Common myeloid progenitor, CD34-positive (primary cell): ENCODE measurements at regions of chr11 and their contacts with region 1.

Region 1: GRCh38 chr11:72091005-72091691 is 10.5 kb downstream of the LRRC51 start:
- DNase-seq: peak; percentile 86 to 93 (median 91)
- H3K4me3 ChIP-seq: peak overlapping the region in 1 of 7 experiments; percentile 14
- H3K27ac ChIP-seq: peak overlapping the region in 1 of 2 experiments; percentile 30
- H3K4me1 ChIP-seq: peaks cover 0 to 18% (median 13%) of the 10 kb centered on the region in 4 experiments
- H3K27me3 ChIP-seq: no peaks in the 10 kb centered on the region

Region 2: GRCh38 chr11:71962428-71963038 is 128.6 kb before region 1 on chr11:
- CTCF ChIA-PET with region 1: no interaction called
- POLR2A ChIA-PET with region 1: no interaction called
- DNase-seq: peak; percentile 54 to 88 (median 80)
- H3K4me3 ChIP-seq: peak overlapping the region in 3 of 7 experiments; percentile 0 to 61 (median 16)
- H3K27ac ChIP-seq: peak overlapping the region in 1 of 2 experiments; percentile 79
- H3K4me1 ChIP-seq: peaks cover 9 to 21% (median 14%) of the 10 kb centered on the region in 4 experiments
- H3K27me3 ChIP-seq: no peaks in the 10 kb centered on the region

Region 3: DNA sequence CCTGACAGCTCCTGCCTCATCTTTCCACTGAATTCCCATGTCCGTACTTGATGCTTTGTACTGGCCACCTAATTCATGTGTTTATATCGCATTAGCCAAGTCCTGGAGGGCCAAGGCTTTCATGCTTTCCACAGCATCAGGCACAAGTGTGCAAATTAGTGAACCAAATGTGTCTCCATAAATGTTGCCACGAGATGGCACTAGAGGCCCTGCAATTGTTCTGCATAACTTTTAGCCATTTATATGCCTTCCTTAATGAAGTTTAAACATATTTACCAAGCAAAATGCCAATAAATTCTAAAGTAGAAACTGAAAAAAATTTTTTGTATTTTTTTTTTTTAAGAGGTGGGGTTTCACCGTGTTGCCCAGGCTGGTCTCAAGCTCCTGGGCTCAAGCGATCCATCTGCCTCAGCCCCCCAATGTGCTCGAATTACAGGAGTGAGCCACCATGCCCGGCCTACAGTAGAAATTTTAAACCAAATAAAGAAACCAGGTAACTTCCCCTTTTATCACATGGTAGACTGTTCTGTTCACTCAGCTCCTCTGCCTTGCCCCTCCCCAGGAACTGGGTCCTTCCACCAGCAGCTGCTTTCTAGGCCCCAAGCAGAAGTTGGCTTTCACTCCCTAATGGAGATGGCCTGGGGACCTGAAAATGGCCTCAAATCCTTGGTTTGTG is 113.3 kb before region 1 on chr11:
- CTCF ChIA-PET with region 1: interaction called, 18 read pairs
- POLR2A ChIA-PET with region 1: no interaction called
- DNase-seq: peak; percentile 68 to 92 (median 88)
- H3K4me3 ChIP-seq: no peak overlapping the region
- H3K27ac ChIP-seq: peak overlapping the region in 1 of 2 experiments; percentile 35
- H3K4me1 ChIP-seq: peaks cover 10 to 25% (median 21%) of the 10 kb centered on the region in 4 experiments
- H3K27me3 ChIP-seq: no peaks in the 10 kb centered on the region

Region 4: DNA sequence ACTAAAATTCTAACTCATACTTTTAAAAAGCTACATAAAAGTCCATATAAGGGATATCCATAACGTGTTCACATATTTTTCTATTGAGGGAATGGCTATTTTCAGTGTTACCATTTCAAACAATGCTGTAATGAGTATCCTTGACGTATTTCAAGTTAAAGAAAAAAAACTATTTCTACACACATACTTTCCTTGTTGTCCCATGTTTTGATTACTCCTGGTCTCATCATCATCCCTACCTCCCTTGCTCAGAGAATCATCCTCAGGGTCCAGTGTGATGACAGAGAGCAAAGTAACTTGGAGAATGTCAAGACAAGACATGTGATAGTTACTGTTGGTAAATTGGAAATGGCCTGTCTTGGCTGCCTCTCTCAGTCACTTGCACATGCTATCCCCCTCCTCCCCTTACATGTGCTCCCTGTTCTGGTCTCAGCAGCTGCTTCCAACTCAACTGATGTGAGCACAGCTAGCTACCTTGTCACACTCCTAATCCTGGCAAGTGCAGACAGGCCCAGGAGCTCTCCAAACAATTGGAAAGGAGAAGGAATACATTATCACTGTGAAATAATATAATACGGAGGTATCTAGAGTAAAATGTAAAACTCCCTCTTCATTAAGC is 32.6 kb before region 1 on chr11:
- CTCF ChIA-PET with region 1: interaction called, 14 read pairs
- POLR2A ChIA-PET with region 1: no interaction called
- DNase-seq: no peak
- H3K4me3 ChIP-seq: no peak overlapping the region
- H3K27ac ChIP-seq: no peak overlapping the region
- H3K4me1 ChIP-seq: no peaks in the 10 kb centered on the region
- H3K27me3 ChIP-seq: no peaks in the 10 kb centered on the region

Region 5: GRCh38 chr11:72080256-72080974 is 10.7 kb before region 1 on chr11 and contains the starts of genes LRRC51 and NUMA1:
- CTCF ChIA-PET with region 1: interaction called, 86 read pairs
- POLR2A ChIA-PET with region 1: no interaction called
- DNase-seq: peak; percentile 100
- H3K4me3 ChIP-seq: peak within 1 kb of the TSS; percentile 77 to 93 (median 85)
- H3K27ac ChIP-seq: peak within 1 kb of the TSS; percentile 74 to 90
- H3K4me1 ChIP-seq: peaks cover 10 to 47% (median 33%) of the 10 kb centered on the region in 4 experiments
- H3K27me3 ChIP-seq: no peaks in the 10 kb centered on the region

Region 6: GRCh38 chr11:72144807-72145560 is 53.8 kb after region 1 on chr11:
- CTCF ChIA-PET with region 1: interaction called, 40 read pairs
- POLR2A ChIA-PET with region 1: no interaction called
- DNase-seq: no peak
- H3K4me3 ChIP-seq: no peak overlapping the region
- H3K27ac ChIP-seq: no peak overlapping the region
- H3K4me1 ChIP-seq: peaks cover 0 to 4% (median 2%) of the 10 kb centered on the region in 4 experiments
- H3K27me3 ChIP-seq: no peaks in the 10 kb centered on the region

Region 7: GRCh38 chr11:72160319-72160718 is 69.2 kb after region 1 on chr11:
- CTCF ChIA-PET with region 1: no interaction called
- POLR2A ChIA-PET with region 1: no interaction called
- DNase-seq: no peak
- H3K4me3 ChIP-seq: no peak overlapping the region
- H3K27ac ChIP-seq: no peak overlapping the region
- H3K4me1 ChIP-seq: no peaks in the 10 kb centered on the region
- H3K27me3 ChIP-seq: no peaks in the 10 kb centered on the region